T-cell (primary cell): ENCODE measurements at regions of chr10 and their contacts with region 1.

Region 1: GRCh38 chr10:35126530-35127296 is at the start of gene CREM:
- DNase-seq: peak; percentile 97 to 100 (median 99)
- ATAC-seq: peak; percentile 83 to 90 (median 88)
- H3K4me3 ChIP-seq: peak within 1 kb of the TSS; percentile 84 to 92
- H3K4me3 Mint-ChIP-seq: peak within 1 kb of the TSS; percentile 88 to 90 (median 89)
- H3K27ac ChIP-seq: peak within 1 kb of the TSS; percentile 100
- H3K27ac Mint-ChIP-seq: peak within 1 kb of the TSS; percentile 94 to 95
- H3K4me1 ChIP-seq: peaks cover 8 to 22% of the 10 kb centered on the region in 2 experiments
- H3K4me1 Mint-ChIP-seq: peaks cover 35 to 57% (median 38%) of the 10 kb centered on the region in 3 donors
- H3K27me3 ChIP-seq: no peaks in the 10 kb centered on the region
- H3K27me3 Mint-ChIP-seq: no peaks in the 10 kb centered on the region
- total RNA-seq, gene CREM: 20.6 to 57.2 (median 26.0) TPM

Region 2: DNA sequence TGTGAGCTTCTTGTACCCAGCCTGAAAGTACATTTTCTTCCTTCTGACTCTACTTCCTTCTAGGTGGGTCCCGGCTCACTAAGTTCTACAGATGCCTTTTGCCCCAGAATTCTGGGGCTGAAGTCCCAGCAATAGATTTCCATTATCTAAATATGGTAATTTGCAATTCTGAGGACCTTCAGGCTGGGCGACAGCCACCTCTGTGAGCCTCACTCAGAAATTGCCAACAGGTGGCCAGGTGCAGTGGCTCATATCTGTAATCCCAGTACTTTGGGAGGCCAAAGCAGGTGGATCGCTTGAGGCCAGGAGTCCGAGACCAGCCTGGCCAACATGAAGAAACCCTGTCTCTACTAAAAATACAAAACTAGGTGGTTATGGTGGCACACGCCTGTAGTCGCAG is 23.6 kb after region 1 on chr10:
- CTCF ChIA-PET with region 1: interaction called, 4 to 6 read pairs
- POLR2A ChIA-PET with region 1: interaction called, 8 to 10 read pairs
- DNase-seq: no peak
- ATAC-seq: no peak
- H3K4me3 ChIP-seq: no peak overlapping the region
- H3K4me3 Mint-ChIP-seq: peak overlapping the region in 2 of 3 donors; percentile 40 to 59
- H3K27ac ChIP-seq: peak overlapping the region; percentile 72
- H3K27ac Mint-ChIP-seq: peak overlapping the region; percentile 75 to 88
- H3K4me1 ChIP-seq: peaks cover 11 to 19% of the 10 kb centered on the region in 2 experiments
- H3K4me1 Mint-ChIP-seq: peaks cover 27 to 38% (median 37%) of the 10 kb centered on the region in 3 donors
- H3K27me3 ChIP-seq: no peaks in the 10 kb centered on the region
- H3K27me3 Mint-ChIP-seq: no peaks in the 10 kb centered on the region

Region 3: GRCh38 chr10:35224045-35224740 is 97.5 kb after region 1 on chr10:
- CTCF ChIA-PET with region 1: interaction called, 8 to 44 read pairs
- POLR2A ChIA-PET with region 1: interaction called in 1 of 2 experiments, 6 read pairs
- DNase-seq: no peak
- ATAC-seq: no peak
- H3K4me3 ChIP-seq: no peak overlapping the region
- H3K4me3 Mint-ChIP-seq: no peak overlapping the region
- H3K27ac ChIP-seq: no peak overlapping the region
- H3K27ac Mint-ChIP-seq: no peak overlapping the region
- H3K4me1 ChIP-seq: no peaks in the 10 kb centered on the region
- H3K4me1 Mint-ChIP-seq: peaks cover 3 to 12% (median 8%) of the 10 kb centered on the region in 3 donors
- H3K27me3 ChIP-seq: peaks cover 0 to 9% of the 10 kb centered on the region in 2 experiments
- H3K27me3 Mint-ChIP-seq: no peaks in the 10 kb centered on the region